ENCODE measurements at regions of chr3 and their contacts with region 1.

Region 1: DNA sequence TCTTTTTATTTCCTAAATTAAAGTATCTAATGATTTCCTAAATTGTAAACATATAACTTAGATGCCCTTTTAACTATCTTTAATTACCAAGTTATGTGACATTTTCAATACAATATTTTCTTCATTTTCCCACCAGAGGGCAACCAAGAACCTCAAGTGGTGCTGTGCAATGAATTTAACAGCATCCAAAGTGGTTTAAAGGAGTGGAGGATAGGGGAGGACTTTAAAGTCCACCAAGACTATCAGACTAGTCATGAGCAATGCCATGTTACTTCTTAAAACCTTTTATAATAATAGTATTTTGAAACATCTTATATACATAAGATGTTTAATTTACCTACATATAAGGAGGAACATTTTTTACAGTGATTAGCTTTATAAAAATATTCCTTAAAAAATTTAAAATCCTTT is 74.4 kb downstream of the DLG1 start:
- DNase-seq: no peak
- H3K4me3 ChIP-seq: no peak overlapping the region
- H3K27ac ChIP-seq: no peak overlapping the region
- H3K4me1 ChIP-seq: peaks cover 0 to 8% (median 3%) of the 10 kb centered on the region in 4 experiments; a peak in 4 of 7 replicates
- H3K27me3 ChIP-seq: no peaks in the 10 kb centered on the region
- CTCF ChIP-seq: peak in 2 of 3 experiments; percentile 48 to 59; a peak in 3 of 4 replicates
- EP300 ChIP-seq: no peak
- POLR2A ChIP-seq: no peak
- RAD21 ChIP-seq: peak; percentile 71 to 72

Region 2: GRCh38 chr3:197203714-197204146 is 20.3 kb before region 1 on chr3:
- CTCF ChIA-PET with region 1: interaction called, 10 read pairs
- POLR2A ChIA-PET with region 1: no interaction called
- DNase-seq: no peak
- H3K4me3 ChIP-seq: peak overlapping the region in 1 of 4 experiments; percentile 31; a peak in 1 of 8 replicates
- H3K27ac ChIP-seq: no peak overlapping the region
- H3K4me1 ChIP-seq: peaks cover 0 to 21% (median 13%) of the 10 kb centered on the region in 4 experiments; a peak in 5 of 7 replicates
- H3K27me3 ChIP-seq: no peaks in the 10 kb centered on the region
- CTCF ChIP-seq: no peak
- EP300 ChIP-seq: 0 out of 3 replicates have a peak, but pooled peaks of 1 of the 2 experiments have one; percentile 45
- POLR2A ChIP-seq: no peak
- RAD21 ChIP-seq: no peak

Region 3: DNA sequence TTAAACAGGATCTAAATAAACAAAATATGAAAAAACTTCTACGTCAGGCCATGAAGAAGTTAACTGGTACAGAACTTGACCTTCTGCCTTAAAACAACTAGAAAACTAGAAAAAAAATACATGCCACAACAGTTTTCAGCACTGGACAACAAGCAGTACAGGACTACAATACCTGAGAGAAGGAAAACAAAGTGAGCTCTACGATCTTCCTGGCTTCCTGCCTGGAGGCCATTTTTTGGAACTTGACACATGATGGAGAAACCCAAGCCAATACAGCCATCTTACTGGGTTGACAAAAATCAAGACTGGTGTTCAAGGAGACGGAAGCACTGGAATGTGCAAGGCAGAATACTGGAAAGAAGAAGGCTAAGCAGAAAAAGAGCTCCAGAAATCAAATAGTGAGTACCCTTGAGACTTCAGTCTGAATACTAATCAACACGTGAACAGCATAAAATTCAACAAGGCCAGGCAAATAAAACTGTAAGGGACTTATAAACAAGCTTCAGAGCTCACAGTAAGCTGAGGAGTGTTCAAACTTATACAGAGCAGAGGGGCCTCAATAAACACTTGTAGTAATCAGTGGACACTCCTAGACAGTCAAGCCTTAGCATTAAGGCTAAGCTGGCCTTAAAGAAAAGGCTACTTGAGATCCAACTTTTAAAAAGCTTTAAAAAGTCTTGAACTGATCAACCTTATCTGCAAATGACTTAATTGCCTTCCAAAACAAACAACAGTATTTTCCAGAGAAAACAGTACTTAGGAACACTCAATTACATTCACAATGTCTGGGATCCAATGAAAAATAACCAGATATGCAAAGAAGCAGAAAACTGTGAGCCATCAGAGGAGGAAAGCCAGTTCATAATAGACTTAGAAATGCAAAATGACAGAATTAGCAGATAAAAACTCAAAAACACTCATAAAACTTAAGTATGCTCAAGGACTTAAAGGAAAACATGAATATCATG is 11.2 kb after region 1 on chr3:
- CTCF ChIA-PET with region 1: interaction called, 40 read pairs
- POLR2A ChIA-PET with region 1: no interaction called
- DNase-seq: no peak
- H3K4me3 ChIP-seq: no peak overlapping the region
- H3K27ac ChIP-seq: no peak overlapping the region
- H3K4me1 ChIP-seq: peaks cover 3 to 15% (median 6%) of the 10 kb centered on the region in 4 experiments; a peak in 6 of 7 replicates
- H3K27me3 ChIP-seq: no peaks in the 10 kb centered on the region
- CTCF ChIP-seq: no peak
- EP300 ChIP-seq: no peak
- POLR2A ChIP-seq: no peak
- RAD21 ChIP-seq: no peak